Astrocyte of the cerebellum (primary cell): ENCODE measurements at regions of chr4 and their contacts with region 1.

Region 1: DNA sequence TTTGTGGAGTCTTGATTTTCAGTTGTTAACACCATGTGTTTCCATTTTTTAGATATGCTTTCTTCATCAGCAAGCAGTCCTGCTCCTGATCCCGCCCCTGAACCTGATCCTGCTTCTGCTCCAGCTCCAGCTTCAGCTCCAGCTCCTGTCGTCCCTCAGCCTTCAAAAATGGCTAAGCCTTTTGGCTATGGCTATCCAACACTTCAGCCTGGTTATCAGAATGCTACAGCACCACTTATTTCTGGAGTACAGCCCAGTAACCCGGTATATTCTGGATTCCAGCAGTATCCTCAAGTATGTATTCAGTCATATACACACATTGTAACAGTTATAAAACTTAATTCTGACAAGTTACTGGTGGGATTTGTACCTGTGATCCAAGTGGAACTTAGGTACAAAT is 60.9 kb downstream of the SEC24B start:
- DNase-seq: no peak
- H3K4me3 ChIP-seq: no peak overlapping the region
- CTCF ChIP-seq: no peak

Region 2: GRCh38 chr4:109435635-109436034 is 58.9 kb before region 1 on chr4:
- in situ Hi-C with region 1: loop called (anchors 5 kb)
- DNase-seq: no peak
- H3K4me3 ChIP-seq: peak overlapping the region; percentile 13
- CTCF ChIP-seq: no peak